Naive thymus-derived CD8-positive, alpha-beta T cell (primary cell): ENCODE measurements at regions of chr6 and their contacts with region 1.

Region 1: GRCh38 chr6:129730477-129731165 is 20.6 kb upstream of the ARHGAP18 start:
- DNase-seq: peak in 6 of 10 donors; percentile 16 to 55 (median 39)
- ATAC-seq: peak; percentile 29 to 52
- H3K4me3 Mint-ChIP-seq: no peak overlapping the region
- H3K27ac Mint-ChIP-seq: peak overlapping the region in 2 of 10 donors; percentile 1 to 3
- H3K4me1 Mint-ChIP-seq: peaks cover 0 to 9% (median 0%) of the 10 kb centered on the region in 4 donors
- H3K27me3 Mint-ChIP-seq: no peaks in the 10 kb centered on the region

Region 2: GRCh38 chr6:129598244-129599187 is 132.1 kb before region 1 on chr6:
- POLR2A ChIA-PET with region 1: interaction called, 11 read pairs
- DNase-seq: peak in 6 of 10 donors; percentile 20 to 76 (median 62)
- ATAC-seq: peak; percentile 83 to 90
- H3K4me3 Mint-ChIP-seq: no peak overlapping the region
- H3K27ac Mint-ChIP-seq: no peak overlapping the region
- H3K4me1 Mint-ChIP-seq: peaks cover 0 to 4% (median 0%) of the 10 kb centered on the region in 4 donors
- H3K27me3 Mint-ChIP-seq: no peaks in the 10 kb centered on the region

Region 3: GRCh38 chr6:129707028-129707427 is 23.6 kb before region 1 on chr6:
- POLR2A ChIA-PET with region 1: no interaction called
- DNase-seq: no peak
- ATAC-seq: no peak
- H3K4me3 Mint-ChIP-seq: no peak overlapping the region
- H3K27ac Mint-ChIP-seq: no peak overlapping the region
- H3K4me1 Mint-ChIP-seq: peaks cover 18 to 36% (median 26%) of the 10 kb centered on the region in 4 donors
- H3K27me3 Mint-ChIP-seq: peaks cover 0 to 12% (median 2%) of the 10 kb centered on the region in 5 donors

Region 4: DNA sequence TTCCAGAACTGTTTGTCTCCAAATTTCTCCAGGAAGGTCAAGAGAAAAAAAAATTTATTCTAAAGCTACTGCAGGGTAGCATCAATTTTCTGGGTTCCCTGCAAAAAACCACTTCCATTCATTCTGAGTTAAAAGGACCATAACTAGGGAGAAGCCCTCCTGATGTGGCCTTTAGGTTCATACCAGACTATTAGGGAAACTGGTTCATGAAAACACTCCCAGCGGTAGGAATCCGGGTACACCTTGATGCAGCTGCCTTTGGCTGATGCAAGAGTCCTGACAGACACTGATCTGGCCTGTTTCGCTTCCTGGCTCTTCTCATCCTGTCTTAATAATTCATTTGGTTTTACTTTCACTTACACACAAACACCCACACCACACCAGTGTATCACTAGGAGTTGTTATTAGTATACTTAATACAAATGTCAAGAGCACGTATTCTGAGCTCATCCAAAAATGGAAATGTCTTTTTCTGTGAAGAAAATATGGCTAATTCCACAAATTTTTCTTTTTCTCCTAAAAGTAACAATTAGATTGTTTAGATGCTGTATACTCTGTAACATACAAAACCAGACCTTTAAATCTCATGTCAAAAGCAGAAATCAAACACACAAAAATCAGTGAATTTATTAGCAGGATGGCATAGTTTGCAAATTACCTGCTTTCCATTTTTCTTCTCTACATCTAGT is 17.7 kb after region 1 on chr6:
- POLR2A ChIA-PET with region 1: interaction called, 17 read pairs
- DNase-seq: peak in 9 of 10 donors; percentile 7 to 67 (median 35)
- ATAC-seq: peak; percentile 80 to 83
- H3K4me3 Mint-ChIP-seq: peak overlapping the region; percentile 55 to 84 (median 78)
- H3K27ac Mint-ChIP-seq: peak overlapping the region; percentile 77 to 98 (median 90)
- H3K4me1 Mint-ChIP-seq: peaks cover 16 to 67% (median 53%) of the 10 kb centered on the region in 4 donors
- H3K27me3 Mint-ChIP-seq: no peaks in the 10 kb centered on the region

Region 5: DNA sequence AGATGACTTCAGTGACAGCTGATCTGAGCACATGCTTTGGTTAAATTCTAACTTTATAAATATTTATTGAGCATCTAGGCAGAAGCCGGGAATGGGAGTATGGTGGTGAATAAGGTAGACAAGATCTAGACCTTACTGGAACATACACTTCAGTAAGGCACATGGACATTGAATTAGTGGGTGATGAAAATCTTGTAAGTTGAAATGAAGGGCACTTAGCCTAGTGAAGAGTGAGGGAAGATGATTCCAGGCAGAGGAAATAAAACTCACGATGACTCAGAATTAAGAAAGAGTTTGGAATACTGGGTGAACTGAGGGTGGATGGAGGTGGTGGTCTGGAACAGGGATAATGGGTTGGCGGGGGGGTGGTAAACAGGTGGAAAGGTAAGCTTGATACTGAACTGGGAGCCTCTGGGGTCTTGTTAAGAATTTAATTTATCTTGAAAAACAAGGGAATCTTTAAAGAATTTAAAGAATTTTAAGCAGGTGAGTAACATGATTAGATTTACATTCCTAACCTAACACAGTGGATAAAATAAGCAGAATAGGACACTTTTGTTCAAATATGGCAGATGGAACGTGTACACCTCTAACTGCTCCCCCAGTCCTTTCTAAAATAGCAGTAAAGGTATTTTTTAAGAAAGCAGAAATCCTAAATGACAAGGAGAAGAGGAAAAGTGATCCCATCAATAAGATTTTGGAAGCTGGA is 54.6 kb after region 1 on chr6:
- POLR2A ChIA-PET with region 1: no interaction called
- DNase-seq: no peak
- ATAC-seq: no peak
- H3K4me3 Mint-ChIP-seq: no peak overlapping the region
- H3K27ac Mint-ChIP-seq: no peak overlapping the region
- H3K4me1 Mint-ChIP-seq: no peaks in the 10 kb centered on the region
- H3K27me3 Mint-ChIP-seq: peaks cover 0 to 8% (median 1%) of the 10 kb centered on the region in 5 donors

Region 6: DNA sequence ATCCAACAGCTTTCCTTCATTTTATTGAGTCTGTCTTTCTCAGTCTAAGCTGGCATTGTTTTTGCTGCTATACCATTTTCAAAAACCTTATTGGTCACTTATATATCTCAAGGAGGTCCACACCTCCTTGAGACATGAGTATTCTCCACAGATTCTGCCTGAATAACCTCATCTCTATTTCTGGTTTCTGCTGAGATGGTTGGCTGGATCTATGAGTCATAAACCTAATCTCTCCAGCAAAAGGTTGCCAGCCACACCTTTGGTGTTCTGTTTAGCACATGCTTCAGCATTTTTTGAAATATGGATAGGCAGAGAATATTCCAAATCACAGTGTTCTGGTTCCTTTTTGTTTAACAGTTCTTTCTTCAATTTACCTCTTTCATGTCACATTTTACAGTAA is 171.3 kb after region 1 on chr6:
- POLR2A ChIA-PET with region 1: no interaction called
- DNase-seq: no peak
- ATAC-seq: no peak
- H3K4me3 Mint-ChIP-seq: no peak overlapping the region
- H3K27ac Mint-ChIP-seq: no peak overlapping the region
- H3K4me1 Mint-ChIP-seq: peaks cover 0 to 2% (median 0%) of the 10 kb centered on the region in 4 donors
- H3K27me3 Mint-ChIP-seq: peaks cover 0 to 9% (median 0%) of the 10 kb centered on the region in 5 donors